B cell (primary cell): ENCODE measurements at regions of chr13 and their contacts with region 1.

Region 1: GRCh38 chr13:23375001-23375971 is 58.2 kb downstream of the SACS start:
- DNase-seq: peak; percentile 96
- ATAC-seq: peak; percentile 85
- H3K4me3 ChIP-seq: peak overlapping the region in 4 of 5 experiments; percentile 46 to 69 (median 67)
- H3K4me3 Mint-ChIP-seq: peak overlapping the region; percentile 79
- H3K27ac ChIP-seq: peak overlapping the region; percentile 49 to 51
- H3K27ac Mint-ChIP-seq: peak overlapping the region; percentile 86
- H3K4me1 ChIP-seq: peaks cover 56 to 59% of the 10 kb centered on the region in 2 donors
- H3K4me1 Mint-ChIP-seq: peaks cover 64% of the 10 kb centered on the region
- H3K27me3 ChIP-seq: no peaks in the 10 kb centered on the region
- H3K27me3 Mint-ChIP-seq: no peaks in the 10 kb centered on the region
- CTCF ChIP-seq: peak; percentile 59

Region 2: GRCh38 chr13:22126433-22127021 is 1248.8 kb before region 1 on chr13:
- CTCF ChIA-PET with region 1: no interaction called
- POLR2A ChIA-PET with region 1: no interaction called
- intact Hi-C with region 1: loop called (anchors 5 kb)
- DNase-seq: peak; percentile 63
- ATAC-seq: peak; percentile 95
- H3K4me3 ChIP-seq: no peak overlapping the region
- H3K4me3 Mint-ChIP-seq: peak overlapping the region; percentile 36
- H3K27ac ChIP-seq: peak overlapping the region in 1 of 2 donors; percentile 27
- H3K27ac Mint-ChIP-seq: no peak overlapping the region
- H3K4me1 ChIP-seq: peaks cover 19 to 25% of the 10 kb centered on the region in 2 donors
- H3K4me1 Mint-ChIP-seq: peaks cover 32% of the 10 kb centered on the region
- H3K27me3 ChIP-seq: no peaks in the 10 kb centered on the region
- H3K27me3 Mint-ChIP-seq: no peaks in the 10 kb centered on the region
- CTCF ChIP-seq: no peak

Region 3: DNA sequence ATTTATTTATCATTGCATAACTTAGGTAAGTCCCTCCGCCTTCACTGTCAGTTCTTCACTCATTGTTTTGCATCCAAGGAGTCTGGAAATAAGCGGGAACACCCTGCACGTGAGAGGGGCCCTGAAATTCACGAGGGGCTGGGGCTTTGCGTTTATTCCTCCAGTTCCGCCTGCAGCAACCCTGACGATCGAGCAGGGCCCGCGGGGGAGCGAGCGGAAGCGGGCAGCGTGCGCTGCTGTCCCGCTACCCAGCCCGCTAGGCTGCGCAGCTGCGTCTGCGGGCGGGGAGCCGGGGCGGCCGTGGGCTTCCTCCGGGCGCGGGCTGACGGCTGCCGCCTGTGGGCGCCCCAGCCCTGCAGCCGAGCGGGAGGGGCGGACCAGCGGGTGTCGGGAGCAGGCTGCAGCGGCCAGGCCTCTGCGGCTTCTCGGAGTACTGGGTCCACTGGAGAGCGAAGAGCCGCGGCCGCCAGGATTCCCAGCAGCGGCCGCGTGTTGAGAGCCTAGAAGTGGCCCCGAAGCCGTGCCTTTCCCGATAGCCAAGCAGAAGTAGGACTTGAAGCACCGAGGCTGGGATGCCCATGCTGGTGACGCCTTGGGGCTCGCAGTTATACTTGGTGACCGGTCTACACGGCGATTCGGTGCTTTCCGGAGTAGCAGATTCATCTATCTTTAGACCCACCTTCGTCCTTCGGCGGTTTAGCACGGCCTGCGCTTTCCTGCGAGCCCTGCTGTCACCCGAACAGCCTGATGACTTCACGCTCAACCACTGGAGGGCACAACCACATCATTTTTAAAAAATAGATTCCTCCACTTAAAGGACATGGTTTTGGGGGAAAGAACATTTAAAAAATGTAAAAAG is 91.1 kb after region 1 on chr13:
- CTCF ChIA-PET with region 1: no interaction called
- POLR2A ChIA-PET with region 1: no interaction called
- intact Hi-C with region 1: loop called (anchors 2 kb)
- DNase-seq: peak; percentile 77
- ATAC-seq: peak; percentile 89
- H3K4me3 ChIP-seq: peak overlapping the region; percentile 42 to 70 (median 53)
- H3K4me3 Mint-ChIP-seq: peak overlapping the region; percentile 87
- H3K27ac ChIP-seq: no peak overlapping the region
- H3K27ac Mint-ChIP-seq: peak overlapping the region; percentile 46
- H3K4me1 ChIP-seq: peaks cover 4 to 12% of the 10 kb centered on the region in 2 donors
- H3K4me1 Mint-ChIP-seq: peaks cover 8% of the 10 kb centered on the region
- H3K27me3 ChIP-seq: peaks cover 0 to 27% (median 9%) of the 10 kb centered on the region in 4 experiments
- H3K27me3 Mint-ChIP-seq: peaks cover 58% of the 10 kb centered on the region
- CTCF ChIP-seq: peak; percentile 68

Region 4: GRCh38 chr13:23888658-23889614 is 513.6 kb after region 1 on chr13 and contains the start of gene MIPEP:
- CTCF ChIA-PET with region 1: no interaction called
- POLR2A ChIA-PET with region 1: no interaction called
- intact Hi-C with region 1: loop called (anchors 1 kb)
- DNase-seq: peak; percentile 92
- ATAC-seq: peak; percentile 93
- H3K4me3 ChIP-seq: peak within 1 kb of the TSS; percentile 24 to 96 (median 80)
- H3K4me3 Mint-ChIP-seq: peak within 1 kb of the TSS; percentile 94
- H3K27ac ChIP-seq: peak within 1 kb of the TSS; percentile 42 to 86
- H3K27ac Mint-ChIP-seq: peak within 1 kb of the TSS; percentile 95
- H3K4me1 ChIP-seq: peaks cover 12 to 17% of the 10 kb centered on the region in 2 donors
- H3K4me1 Mint-ChIP-seq: peaks cover 23% of the 10 kb centered on the region
- H3K27me3 ChIP-seq: no peaks in the 10 kb centered on the region
- H3K27me3 Mint-ChIP-seq: no peaks in the 10 kb centered on the region
- CTCF ChIP-seq: peak; percentile 69
- total RNA-seq, gene MIPEP: 15.7 and 16.9 TPM in 2 replicates

Region 5: DNA sequence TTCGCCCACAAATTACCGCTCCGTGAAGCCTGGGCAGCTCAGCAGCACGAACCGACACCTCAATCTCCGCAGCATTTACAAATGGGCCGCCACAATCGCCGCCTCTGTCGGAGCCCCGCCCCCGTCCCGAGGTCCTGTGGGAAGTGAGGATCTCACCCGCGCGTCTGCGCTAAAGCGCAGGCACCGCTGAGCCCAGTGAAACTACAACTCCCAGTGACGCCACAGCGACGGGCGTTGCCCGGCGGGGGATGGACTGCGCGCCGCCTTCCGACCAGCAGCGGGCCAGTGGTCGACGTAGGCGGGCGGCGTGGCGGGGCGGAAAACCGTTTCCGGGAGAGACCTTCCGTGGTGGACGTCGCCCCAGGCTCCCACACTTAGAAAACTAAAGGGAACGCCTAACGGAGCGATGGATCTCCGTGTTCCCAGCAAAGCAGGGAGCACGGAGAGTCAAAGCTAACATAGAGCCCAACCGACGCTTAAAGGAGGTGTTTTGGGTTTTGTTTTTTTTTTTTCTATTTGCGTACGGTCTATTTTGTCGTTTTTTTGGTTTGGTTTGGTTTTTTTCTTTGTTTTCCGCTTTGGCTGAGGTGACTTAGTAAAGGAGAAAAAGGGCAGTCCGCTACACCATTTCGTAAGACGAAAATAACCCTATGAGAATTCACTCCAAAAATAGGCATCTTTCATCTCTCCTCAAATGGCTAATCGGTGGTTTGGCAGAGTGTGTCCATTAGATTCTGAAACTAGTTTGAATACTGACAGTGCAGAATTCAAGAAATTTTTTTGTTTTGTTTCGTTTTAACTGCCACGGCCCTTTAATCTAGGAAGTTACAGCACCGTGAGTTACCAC is 1547.7 kb after region 1 on chr13:
- CTCF ChIA-PET with region 1: no interaction called
- POLR2A ChIA-PET with region 1: no interaction called
- intact Hi-C with region 1: loop called (anchors 2 kb)
- DNase-seq: peak; percentile 96
- ATAC-seq: peak; percentile 98
- H3K4me3 ChIP-seq: peak overlapping the region; percentile 94 to 96 (median 95)
- H3K4me3 Mint-ChIP-seq: peak overlapping the region; percentile 97
- H3K27ac ChIP-seq: peak overlapping the region; percentile 98
- H3K27ac Mint-ChIP-seq: peak overlapping the region; percentile 99
- H3K4me1 ChIP-seq: peaks cover 5 to 11% of the 10 kb centered on the region in 2 donors
- H3K4me1 Mint-ChIP-seq: peaks cover 15% of the 10 kb centered on the region
- H3K27me3 ChIP-seq: no peaks in the 10 kb centered on the region
- H3K27me3 Mint-ChIP-seq: no peaks in the 10 kb centered on the region
- CTCF ChIP-seq: peak; percentile 16